ENCODE measurements at regions of chr1 and their contacts with region 1.

Region 1: DNA sequence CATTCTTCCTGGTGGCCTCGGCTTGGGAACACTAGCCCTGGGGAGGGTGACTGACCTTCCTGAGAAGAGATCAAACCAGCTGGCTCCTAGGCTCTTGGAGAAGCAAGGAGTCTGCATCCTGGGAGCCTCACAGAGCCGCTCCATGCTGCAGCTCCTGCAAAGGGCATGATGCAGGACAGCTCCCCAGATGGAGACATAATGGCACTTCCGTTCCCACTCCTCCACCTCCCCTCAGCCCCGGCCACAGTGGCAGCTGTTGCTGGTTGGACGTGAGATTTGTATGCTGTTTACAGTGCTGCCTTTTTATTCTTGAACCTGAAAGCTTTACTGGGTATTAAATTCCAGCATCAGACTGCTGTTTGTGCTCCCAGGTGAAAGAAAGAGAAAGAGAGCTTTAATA is 83.7 kb upstream of the CTTNBP2NL start:
- DNase-seq: no peak
- H3K4me3 ChIP-seq: no peak overlapping the region
- H3K27me3 ChIP-seq: peaks cover 5% of the 10 kb centered on the region
- CTCF ChIP-seq: no peak

Region 2: GRCh38 chr1:111212634-111213291 is 1099.6 kb before region 1 on chr1:
- CTCF ChIA-PET with region 1: no interaction called
- POLR2A ChIA-PET with region 1: interaction called, 12 read pairs
- DNase-seq: no peak
- H3K4me3 ChIP-seq: no peak overlapping the region
- H3K27me3 ChIP-seq: 0 out of 2 replicates have a peak, but pooled peaks cover 2% of the 10 kb centered on the region
- CTCF ChIP-seq: no peak

Region 3: GRCh38 chr1:111955755-111956154 is 356.6 kb before region 1 on chr1:
- CTCF ChIA-PET with region 1: no interaction called
- POLR2A ChIA-PET with region 1: no interaction called
- DNase-seq: no peak
- H3K4me3 ChIP-seq: no peak overlapping the region
- H3K27me3 ChIP-seq: no peaks in the 10 kb centered on the region
- CTCF ChIP-seq: no peak

Region 4: DNA sequence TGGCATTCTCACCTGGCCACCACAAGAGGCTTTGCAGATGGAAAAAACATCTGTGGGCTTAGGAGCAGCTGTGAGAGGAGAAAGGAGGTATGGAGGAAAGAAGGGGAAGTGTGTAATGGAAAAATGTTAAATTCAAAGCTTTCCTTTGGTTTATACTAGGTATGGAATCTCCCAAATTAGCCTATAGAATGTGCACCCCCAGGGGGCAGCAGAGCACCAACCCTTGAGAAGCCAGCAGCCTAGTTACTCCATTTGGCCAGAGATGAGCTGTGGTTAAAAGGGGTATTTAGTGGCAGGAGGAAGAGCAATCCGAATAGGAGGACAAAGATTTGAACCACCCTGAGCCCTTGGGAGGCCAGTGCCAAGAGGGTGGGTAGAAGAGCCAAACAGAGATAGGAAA is 13.8 kb before region 1 on chr1:
- CTCF ChIA-PET with region 1: interaction called, 10 read pairs
- POLR2A ChIA-PET with region 1: no interaction called
- DNase-seq: no peak
- H3K4me3 ChIP-seq: no peak overlapping the region
- H3K27me3 ChIP-seq: no peaks in the 10 kb centered on the region; the same call in 1 of the 2 replicates
- CTCF ChIP-seq: peak; percentile 72

Measured in BJ (cell line).